ENCODE measurements at regions of chr7 and their contacts with region 1.

Region 1: DNA sequence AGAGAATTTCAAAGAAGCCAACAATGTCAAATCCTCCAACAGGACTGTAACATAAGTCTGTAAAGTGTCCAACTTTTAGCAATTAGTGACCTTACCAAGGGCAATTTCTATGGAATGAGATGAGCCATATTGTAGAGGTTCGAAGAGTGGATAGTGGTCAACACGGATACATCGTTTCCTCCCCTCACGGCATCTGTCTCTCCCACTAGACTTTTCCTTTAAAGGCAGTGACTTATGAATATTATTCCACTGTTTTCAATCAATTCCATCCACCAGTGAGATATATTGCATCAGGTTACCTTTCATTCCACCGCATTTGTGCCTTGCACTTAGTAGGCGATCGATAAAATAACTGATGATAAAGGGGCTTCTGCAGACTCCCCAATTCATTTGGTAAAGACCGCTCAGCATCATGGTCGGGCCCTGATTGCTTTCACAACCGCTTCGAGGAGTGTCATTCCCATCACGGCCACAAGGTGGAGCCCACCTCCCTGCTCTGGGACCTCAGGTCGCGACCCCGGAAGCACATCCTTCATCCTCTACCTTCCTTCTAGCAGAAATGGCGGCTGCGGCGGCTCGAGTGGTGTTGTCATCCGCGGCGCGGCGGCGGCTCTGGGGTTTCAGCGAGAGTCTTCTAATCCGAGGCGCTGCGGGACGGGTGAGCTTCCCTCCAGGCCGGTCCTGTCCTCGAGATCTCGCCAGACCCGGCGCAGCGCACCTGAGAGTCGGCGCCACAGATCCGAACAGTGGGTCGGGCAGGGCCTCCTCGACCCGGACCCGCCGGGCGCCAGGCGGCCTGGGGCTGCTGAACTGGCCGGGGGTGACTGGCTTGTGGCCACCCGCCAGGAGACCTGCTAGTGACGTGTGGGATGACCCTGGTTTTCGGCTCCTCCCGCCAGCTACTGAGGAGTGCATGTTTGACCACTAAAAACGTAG is at the start of gene PMPCB:
- DNase-seq: peak; percentile 95 to 96
- ATAC-seq: peak; percentile 96 to 99 (median 98)
- H3K4me3 ChIP-seq: peak within 1 kb of the TSS; percentile 70 to 95 (median 86)
- H3K27ac ChIP-seq: peak within 1 kb of the TSS in 9 of 10 donors; percentile 72 to 92 (median 87)
- H3K4me1 ChIP-seq: peaks cover 0 to 23% (median 17%) of the 10 kb centered on the region in 9 donors
- H3K27me3 ChIP-seq: no peaks in the 10 kb centered on the region
- CTCF ChIP-seq: peak; percentile 94 to 99 (median 97)
- total RNA-seq, gene PMPCB: 70.4 to 98.4 (median 92.4) TPM

Region 2: GRCh38 chr7:103344453-103345149 is 47.4 kb after region 1 on chr7 and contains the start of gene DNAJC2:
- intact Hi-C with region 1: loop called in 3 of 10 experiments (anchors 2 to 10 kb)
- DNase-seq: peak; percentile 79 to 88
- ATAC-seq: peak; percentile 90 to 96 (median 93)
- H3K4me3 ChIP-seq: peak within 1 kb of the TSS; percentile 73 to 95 (median 88)
- H3K27ac ChIP-seq: peak within 1 kb of the TSS; percentile 14 to 95 (median 86)
- H3K4me1 ChIP-seq: peaks cover 1 to 58% (median 47%) of the 10 kb centered on the region in 9 donors
- H3K27me3 ChIP-seq: no peaks in the 10 kb centered on the region
- CTCF ChIP-seq: no peak
- total RNA-seq, gene DNAJC2: 11.4 to 17.7 (median 14.0) TPM

Region 3: GRCh38 chr7:103413407-103413806 is 116.2 kb after region 1 on chr7:
- intact Hi-C with region 1: loop called in 2 of 10 experiments (anchors 5 kb)
- DNase-seq: no peak
- ATAC-seq: no peak
- H3K4me3 ChIP-seq: no peak overlapping the region
- H3K27ac ChIP-seq: no peak overlapping the region
- H3K4me1 ChIP-seq: no peaks in the 10 kb centered on the region
- H3K27me3 ChIP-seq: peaks cover 0 to 13% (median 8%) of the 10 kb centered on the region in 7 donors
- CTCF ChIP-seq: no peak

Measured in heart right ventricle (tissue), 16 donors.